Naive thymus-derived CD4-positive, alpha-beta T cell (primary cell): ENCODE measurements at regions of chr9 and their contacts with region 1.

Region 1: DNA sequence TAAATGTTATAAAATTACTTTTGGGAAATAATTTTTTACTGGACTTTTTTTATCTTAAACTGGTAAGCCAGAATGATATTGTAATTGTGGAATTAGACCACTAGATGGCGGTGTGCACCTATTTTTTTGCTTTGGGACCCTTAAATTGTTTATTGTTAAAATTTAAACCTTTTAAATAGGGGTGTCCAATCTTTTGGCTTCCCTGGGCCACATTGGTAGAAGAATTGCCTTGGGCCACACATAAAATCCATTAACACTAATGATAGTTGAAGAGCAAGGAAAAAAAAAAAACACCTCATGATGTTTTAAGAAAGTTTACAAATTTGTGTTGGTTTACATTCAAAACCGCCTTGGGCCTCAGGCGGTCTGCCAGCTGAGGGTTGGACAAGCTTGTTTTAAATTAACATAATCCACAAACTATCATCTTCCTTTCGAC is 28.4 kb upstream of the GADD45G start:
- DNase-seq: peak in 5 of 9 donors; percentile 27 to 41 (median 38)
- ATAC-seq: no peak
- H3K4me3 ChIP-seq: no peak overlapping the region
- H3K4me3 Mint-ChIP-seq: no peak overlapping the region
- H3K27ac ChIP-seq: no peak overlapping the region
- H3K27ac Mint-ChIP-seq: no peak overlapping the region
- H3K4me1 ChIP-seq: no peaks in the 10 kb centered on the region
- H3K4me1 Mint-ChIP-seq: peaks cover 10 to 24% (median 17%) of the 10 kb centered on the region in 7 donors
- H3K27me3 ChIP-seq: peaks cover 0 to 3% of the 10 kb centered on the region in 2 donors
- H3K27me3 Mint-ChIP-seq: peaks cover 17 to 65% (median 32%) of the 10 kb centered on the region in 5 donors

Region 2: DNA sequence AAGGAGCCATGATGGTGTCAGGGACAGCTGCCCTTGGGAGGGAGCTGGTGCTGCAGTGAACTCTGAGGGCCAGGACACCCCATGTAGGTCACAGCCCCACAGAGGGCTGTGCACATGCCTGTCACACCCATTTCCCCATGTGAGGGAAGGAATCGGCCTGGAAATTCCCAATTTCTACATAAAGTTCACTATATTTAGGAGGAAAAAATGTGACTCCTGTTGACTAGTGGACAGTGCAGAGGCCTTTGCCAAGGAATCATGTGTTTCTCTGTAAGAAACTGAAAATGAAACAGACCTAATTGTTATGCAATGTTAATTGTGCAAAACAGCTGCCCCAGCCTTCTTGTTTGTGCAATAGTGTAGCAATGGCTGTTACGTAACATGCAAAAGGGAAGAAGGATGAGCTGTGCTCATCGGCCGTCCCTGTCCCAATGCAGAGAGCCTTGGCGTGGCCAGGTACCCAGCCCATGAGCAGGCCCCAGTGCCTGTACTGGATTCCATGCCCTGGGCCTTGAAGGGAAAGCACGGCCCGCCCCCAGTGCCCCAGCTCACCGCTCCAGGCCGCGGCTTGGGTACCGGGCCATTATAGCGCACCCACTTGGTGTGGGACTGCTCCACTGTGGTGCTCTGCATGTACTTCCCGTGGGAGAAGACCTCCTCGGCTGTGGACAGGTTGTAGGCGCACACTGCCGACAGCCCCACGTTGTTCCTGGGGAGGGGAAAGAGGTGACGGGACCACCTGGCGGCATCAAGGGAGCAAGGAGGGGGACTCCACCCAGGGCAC is 188.1 kb before region 1 on chr9:
- CTCF ChIA-PET with region 1: no interaction called
- POLR2A ChIA-PET with region 1: no interaction called
- intact Hi-C with region 1: no loop called
- DNase-seq: no peak
- ATAC-seq: peak; percentile 78
- H3K4me3 ChIP-seq: no peak overlapping the region
- H3K4me3 Mint-ChIP-seq: no peak overlapping the region
- H3K27ac ChIP-seq: no peak overlapping the region
- H3K27ac Mint-ChIP-seq: peak overlapping the region in 5 of 9 donors; percentile 8 to 43 (median 17)
- H3K4me1 ChIP-seq: no peaks in the 10 kb centered on the region
- H3K4me1 Mint-ChIP-seq: peaks cover 9 to 43% (median 16%) of the 10 kb centered on the region in 7 donors
- H3K27me3 ChIP-seq: no peaks in the 10 kb centered on the region
- H3K27me3 Mint-ChIP-seq: no peaks in the 10 kb centered on the region

Region 3: GRCh38 chr9:90180381-90180780 is 604.0 kb after region 1 on chr9:
- CTCF ChIA-PET with region 1: no interaction called
- POLR2A ChIA-PET with region 1: no interaction called
- intact Hi-C with region 1: no loop called
- DNase-seq: no peak
- ATAC-seq: no peak
- H3K4me3 ChIP-seq: no peak overlapping the region
- H3K4me3 Mint-ChIP-seq: no peak overlapping the region
- H3K27ac ChIP-seq: no peak overlapping the region
- H3K27ac Mint-ChIP-seq: no peak overlapping the region
- H3K4me1 ChIP-seq: no peaks in the 10 kb centered on the region
- H3K4me1 Mint-ChIP-seq: peaks cover 0 to 1% (median 0%) of the 10 kb centered on the region in 7 donors
- H3K27me3 ChIP-seq: no peaks in the 10 kb centered on the region
- H3K27me3 Mint-ChIP-seq: peaks cover 0 to 10% (median 4%) of the 10 kb centered on the region in 5 donors

Region 4: GRCh38 chr9:90870621-90871326 is 1294.4 kb after region 1 on chr9:
- CTCF ChIA-PET with region 1: interaction called, 3 read pairs
- POLR2A ChIA-PET with region 1: no interaction called
- intact Hi-C with region 1: loop called in 1 of 2 experiments (anchors 5 kb)
- DNase-seq: peak in 5 of 9 donors; percentile 32 to 50 (median 44)
- ATAC-seq: peak; percentile 60
- H3K4me3 ChIP-seq: no peak overlapping the region
- H3K4me3 Mint-ChIP-seq: no peak overlapping the region
- H3K27ac ChIP-seq: no peak overlapping the region
- H3K27ac Mint-ChIP-seq: no peak overlapping the region
- H3K4me1 ChIP-seq: no peaks in the 10 kb centered on the region
- H3K4me1 Mint-ChIP-seq: no peaks in the 10 kb centered on the region
- H3K27me3 ChIP-seq: peaks cover 0 to 2% of the 10 kb centered on the region in 2 donors
- H3K27me3 Mint-ChIP-seq: peaks cover 0 to 26% (median 6%) of the 10 kb centered on the region in 5 donors

Region 5: GRCh38 chr9:91223000-91223399 is 1646.6 kb after region 1 on chr9:
- CTCF ChIA-PET with region 1: no interaction called
- POLR2A ChIA-PET with region 1: no interaction called
- intact Hi-C with region 1: no loop called
- DNase-seq: no peak
- ATAC-seq: no peak
- H3K4me3 ChIP-seq: no peak overlapping the region
- H3K4me3 Mint-ChIP-seq: no peak overlapping the region
- H3K27ac ChIP-seq: no peak overlapping the region
- H3K27ac Mint-ChIP-seq: no peak overlapping the region
- H3K4me1 ChIP-seq: no peaks in the 10 kb centered on the region
- H3K4me1 Mint-ChIP-seq: no peaks in the 10 kb centered on the region
- H3K27me3 ChIP-seq: no peaks in the 10 kb centered on the region
- H3K27me3 Mint-ChIP-seq: no peaks in the 10 kb centered on the region